ENCODE measurements at regions of chr12 and their contacts with region 1.

Region 1: GRCh38 chr12:111298582-111299436 is 70.1 kb downstream of the PHETA1 start:
- DNase-seq: no peak
- ATAC-seq: peak; percentile 46

Region 2: DNA sequence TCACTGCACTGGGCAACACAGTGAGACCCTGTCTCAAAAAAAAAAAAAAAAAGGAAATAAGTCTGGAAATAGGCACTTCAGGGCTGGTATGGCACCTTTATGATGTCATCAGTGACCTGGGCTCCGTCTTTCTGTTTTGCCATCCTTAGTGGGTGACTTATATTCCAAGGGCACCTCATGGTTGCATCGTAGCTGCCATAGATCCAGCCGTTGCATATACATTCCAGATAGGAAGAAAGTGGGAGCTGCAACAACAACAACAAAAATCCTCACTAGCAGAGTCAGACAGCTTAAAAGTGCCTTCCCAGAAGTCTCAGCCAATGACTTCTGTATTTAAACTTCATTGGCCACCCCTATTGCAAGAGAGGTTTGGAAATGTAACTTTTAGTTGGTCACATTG is 404.9 kb before region 1 on chr12:
- intact Hi-C with region 1: loop called (anchors 2 kb)
- DNase-seq: no peak
- ATAC-seq: no peak

Region 3: GRCh38 chr12:110937104-110937641 is 361.6 kb before region 1 on chr12:
- intact Hi-C with region 1: loop called (anchors 2 kb)
- DNase-seq: peak; percentile 78
- ATAC-seq: peak; percentile 53

Region 4: GRCh38 chr12:111024205-111024801 is 274.5 kb before region 1 on chr12:
- intact Hi-C with region 1: loop called (anchors 5 kb)
- DNase-seq: peak; percentile 74
- ATAC-seq: peak; percentile 80

Measured in Right ventricle myocardium inferior (tissue), 1 donor.